ENCODE measurements at regions of chr16 and their contacts with region 1.

Region 1: GRCh38 chr16:10579965-10580882 is at the start of gene EMP2:
- DNase-seq: peak; percentile 72
- H3K4me3 ChIP-seq: peak within 1 kb of the TSS; percentile 64 to 73 (median 64)
- H3K27ac ChIP-seq: peak within 1 kb of the TSS; percentile 30
- H3K4me1 ChIP-seq: peaks cover 3% of the 10 kb centered on the region
- H3K27me3 ChIP-seq: peaks cover 6 to 12% of the 10 kb centered on the region in 2 experiments
- CTCF ChIP-seq: peak; percentile 47 to 80
- POLR2A ChIP-seq: no peak
- total RNA-seq, gene EMP2: 18.3 and 25.5 TPM in 2 replicates

Region 2: GRCh38 chr16:10521681-10522274 is 58.4 kb before region 1 on chr16:
- CTCF ChIA-PET with region 1: interaction called, 9 read pairs
- POLR2A ChIA-PET with region 1: no interaction called
- dilution Hi-C with region 1: no loop called
- intact Hi-C with region 1: loop called (anchors 1 kb)
- DNase-seq: peak; percentile 49
- H3K4me3 ChIP-seq: no peak overlapping the region
- H3K27ac ChIP-seq: no peak overlapping the region
- H3K4me1 ChIP-seq: no peaks in the 10 kb centered on the region
- H3K27me3 ChIP-seq: no peaks in the 10 kb centered on the region
- CTCF ChIP-seq: peak; percentile 69 to 82
- POLR2A ChIP-seq: no peak

Region 3: GRCh38 chr16:10558746-10559641 is 21.2 kb before region 1 on chr16:
- CTCF ChIA-PET with region 1: interaction called, 8 read pairs
- POLR2A ChIA-PET with region 1: no interaction called
- dilution Hi-C with region 1: no loop called
- intact Hi-C with region 1: loop called (anchors 1 kb)
- DNase-seq: peak; percentile 52
- H3K4me3 ChIP-seq: peak overlapping the region in 2 of 3 experiments; percentile 2 to 19
- H3K27ac ChIP-seq: peak overlapping the region; percentile 26
- H3K4me1 ChIP-seq: peaks cover 13% of the 10 kb centered on the region
- H3K27me3 ChIP-seq: no peaks in the 10 kb centered on the region
- CTCF ChIP-seq: no peak
- POLR2A ChIP-seq: no peak